Mammary epithelial cell (primary cell): ENCODE measurements at regions of chr15 and their contacts with region 1.

Region 1: DNA sequence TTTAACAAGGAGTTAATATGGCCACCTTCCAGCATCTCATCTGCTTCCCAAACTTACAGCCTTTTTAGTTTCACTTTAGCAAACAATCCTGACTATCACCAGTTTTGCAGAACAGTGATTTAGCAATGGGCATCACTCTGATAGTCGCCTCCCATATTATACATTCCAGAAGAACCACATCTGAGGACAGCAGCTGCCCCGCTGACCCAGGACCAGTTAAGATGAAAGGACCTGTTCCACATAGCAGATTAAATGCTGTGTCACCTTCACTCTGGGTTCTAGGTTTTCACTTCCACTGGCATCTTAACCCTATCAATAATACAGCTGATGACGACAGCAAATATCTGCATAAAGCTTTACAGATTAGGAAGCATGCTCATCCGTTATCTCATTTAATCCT is 99.8 kb downstream of the TRIM69 start:
- DNase-seq: no peak
- H3K4me3 ChIP-seq: no peak overlapping the region
- H3K27ac ChIP-seq: no peak overlapping the region
- H3K4me1 ChIP-seq: peaks cover 14% of the 10 kb centered on the region
- H3K27me3 ChIP-seq: no peaks in the 10 kb centered on the region
- CTCF ChIP-seq: no peak

Region 2: DNA sequence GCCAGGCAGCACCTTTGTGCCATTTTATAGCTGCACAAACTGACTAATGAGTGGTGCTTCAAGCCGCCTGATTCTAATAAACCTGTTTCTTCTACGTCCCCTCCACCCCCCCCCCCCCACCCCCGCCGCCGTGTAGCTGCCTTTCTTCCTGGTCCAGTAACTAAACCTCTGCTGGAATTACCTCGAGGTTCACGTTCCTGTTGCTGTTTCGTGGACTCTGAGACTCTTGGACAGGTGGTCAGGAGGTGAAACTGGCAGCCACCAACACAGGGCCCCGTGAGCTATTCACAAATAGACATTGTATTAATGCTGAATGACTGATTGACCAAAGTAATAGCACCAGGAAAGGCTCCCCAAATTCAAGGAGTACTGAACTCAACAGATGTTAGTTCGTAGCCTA is 25.9 kb before region 1 on chr15:
- CTCF ChIA-PET with region 1: interaction called, 11 read pairs
- dilution Hi-C with region 1: no loop called
- in situ Hi-C with region 1: no loop called
- intact Hi-C with region 1: no loop called
- DNase-seq: no peak
- H3K4me3 ChIP-seq: no peak overlapping the region
- H3K27ac ChIP-seq: no peak overlapping the region
- H3K4me1 ChIP-seq: peaks cover 13% of the 10 kb centered on the region
- H3K27me3 ChIP-seq: peaks cover 11% of the 10 kb centered on the region
- CTCF ChIP-seq: no peak

Region 3: GRCh38 chr15:44910981-44911625 is 75.0 kb after region 1 on chr15:
- CTCF ChIA-PET with region 1: no interaction called
- dilution Hi-C with region 1: no loop called
- in situ Hi-C with region 1: no loop called
- intact Hi-C with region 1: no loop called
- DNase-seq: no peak
- H3K4me3 ChIP-seq: no peak overlapping the region
- H3K27ac ChIP-seq: no peak overlapping the region
- H3K4me1 ChIP-seq: no peaks in the 10 kb centered on the region
- H3K27me3 ChIP-seq: no peaks in the 10 kb centered on the region
- CTCF ChIP-seq: no peak

Region 4: DNA sequence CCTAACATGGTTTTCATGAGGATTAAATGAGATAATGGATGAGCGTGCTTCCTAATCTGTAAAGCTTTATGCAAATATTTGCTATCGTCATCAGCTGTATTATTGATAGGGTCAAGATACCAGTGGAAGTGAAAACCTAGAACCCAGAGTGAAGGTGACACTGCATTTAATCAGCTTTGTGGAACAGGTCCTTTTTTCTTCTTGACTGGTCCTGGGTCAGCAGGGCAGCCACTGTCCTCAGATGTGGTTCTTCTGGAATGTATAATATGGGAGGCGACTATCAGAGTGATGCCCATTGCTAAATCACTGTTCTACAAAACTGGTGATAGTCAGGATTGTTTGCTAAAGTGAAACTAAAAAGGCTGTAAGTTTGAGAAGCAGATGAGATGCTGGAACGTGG is 228.3 kb after region 1 on chr15:
- CTCF ChIA-PET with region 1: no interaction called
- dilution Hi-C with region 1: no loop called
- in situ Hi-C with region 1: loop called in 1 of 2 experiments (anchors 10 kb)
- intact Hi-C with region 1: no loop called
- DNase-seq: peak; percentile 24
- H3K4me3 ChIP-seq: no peak overlapping the region
- H3K27ac ChIP-seq: no peak overlapping the region
- H3K4me1 ChIP-seq: peaks cover 11% of the 10 kb centered on the region
- H3K27me3 ChIP-seq: no peaks in the 10 kb centered on the region
- CTCF ChIP-seq: no peak